ENCODE measurements at regions of chr9 and their contacts with region 1.

Region 1: DNA sequence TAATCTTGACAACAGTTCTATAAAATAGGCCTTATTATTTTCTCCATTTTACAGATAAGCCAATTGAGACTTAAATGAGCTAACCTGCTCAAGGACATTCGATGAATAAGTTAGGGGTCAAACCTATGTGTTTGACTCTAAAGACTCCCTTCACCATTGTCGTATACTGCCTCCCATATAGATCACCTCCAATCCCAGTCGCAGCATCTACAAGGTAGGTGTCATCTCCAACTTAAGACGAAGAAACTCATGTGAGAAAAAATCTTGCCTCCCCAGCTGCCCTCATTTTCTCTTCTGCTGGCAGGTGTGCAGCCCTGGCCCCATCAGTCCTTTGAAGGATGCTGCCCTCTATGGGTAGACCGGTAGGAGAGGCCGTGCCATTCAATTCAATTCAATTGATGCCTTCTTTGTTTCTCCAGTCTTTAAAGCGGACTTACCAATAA is 75.2 kb upstream of the SMARCA2 start:
- DNase-seq: peak; percentile 82
- ATAC-seq: peak; percentile 87
- H3K4me3 ChIP-seq: peak overlapping the region; percentile 39
- H3K27ac ChIP-seq: peak overlapping the region; percentile 97
- H3K4me1 ChIP-seq: peaks cover 25% of the 10 kb centered on the region
- H3K27me3 ChIP-seq: no peaks in the 10 kb centered on the region
- CTCF ChIP-seq: peak; percentile 94 to 99 (median 97)
- EP300 ChIP-seq: peak; percentile 19 to 23; a peak in 1 of 4 replicates
- POLR2A ChIP-seq: no peak
- RAD21 ChIP-seq: peak; percentile 95

Region 2: GRCh38 chr9:1709345-1709744 is 230.6 kb before region 1 on chr9:
- CTCF ChIA-PET with region 1: interaction called, 24 read pairs
- POLR2A ChIA-PET with region 1: no interaction called
- RAD21 ChIA-PET with region 1: interaction called, 10 read pairs
- SMC1A ChIA-PET with region 1: interaction called, 10 read pairs
- in situ Hi-C with region 1: no loop called
- intact Hi-C with region 1: loop called (anchors 5 kb)
- DNase-seq: no peak
- ATAC-seq: peak; percentile 64
- H3K4me3 ChIP-seq: no peak overlapping the region
- H3K27ac ChIP-seq: no peak overlapping the region
- H3K4me1 ChIP-seq: no peaks in the 10 kb centered on the region
- H3K27me3 ChIP-seq: no peaks in the 10 kb centered on the region
- CTCF ChIP-seq: peak; percentile 35 to 58 (median 55); a peak in 4 of 6 replicates
- EP300 ChIP-seq: no peak
- POLR2A ChIP-seq: no peak
- RAD21 ChIP-seq: peak; percentile 45

Region 3: GRCh38 chr9:1837449-1838084 is 102.4 kb before region 1 on chr9:
- CTCF ChIA-PET with region 1: interaction called, 87 read pairs
- POLR2A ChIA-PET with region 1: interaction called, 4 read pairs
- RAD21 ChIA-PET with region 1: interaction called, 40 read pairs
- SMC1A ChIA-PET with region 1: interaction called, 40 read pairs
- in situ Hi-C with region 1: no loop called
- intact Hi-C with region 1: loop called (anchors 1 kb)
- DNase-seq: peak; percentile 45
- ATAC-seq: peak; percentile 98
- H3K4me3 ChIP-seq: no peak overlapping the region
- H3K27ac ChIP-seq: no peak overlapping the region
- H3K4me1 ChIP-seq: no peaks in the 10 kb centered on the region
- H3K27me3 ChIP-seq: no peaks in the 10 kb centered on the region
- CTCF ChIP-seq: peak; percentile 70 to 77 (median 74)
- EP300 ChIP-seq: no peak
- POLR2A ChIP-seq: no peak
- RAD21 ChIP-seq: peak; percentile 71

Region 4: GRCh38 chr9:1882711-1883403 is 57.1 kb before region 1 on chr9:
- CTCF ChIA-PET with region 1: interaction called, 26 read pairs
- POLR2A ChIA-PET with region 1: interaction called, 11 read pairs
- RAD21 ChIA-PET with region 1: interaction called, 50 read pairs
- SMC1A ChIA-PET with region 1: interaction called, 42 read pairs
- in situ Hi-C with region 1: loop called (anchors 5 kb)
- intact Hi-C with region 1: no loop called
- DNase-seq: no peak
- ATAC-seq: no peak
- H3K4me3 ChIP-seq: no peak overlapping the region
- H3K27ac ChIP-seq: no peak overlapping the region
- H3K4me1 ChIP-seq: peaks cover 27% of the 10 kb centered on the region
- H3K27me3 ChIP-seq: no peaks in the 10 kb centered on the region
- CTCF ChIP-seq: no peak
- EP300 ChIP-seq: no peak
- POLR2A ChIP-seq: no peak
- RAD21 ChIP-seq: no peak

Region 5: GRCh38 chr9:2053883-2054845 is 114.2 kb after region 1 on chr9:
- CTCF ChIA-PET with region 1: interaction called, 5 read pairs
- POLR2A ChIA-PET with region 1: interaction called, 3 read pairs
- RAD21 ChIA-PET with region 1: interaction called, 5 read pairs
- SMC1A ChIA-PET with region 1: interaction called, 34 read pairs
- in situ Hi-C with region 1: no loop called
- intact Hi-C with region 1: loop called (anchors 2 kb)
- DNase-seq: peak; percentile 95
- ATAC-seq: peak; percentile 95
- H3K4me3 ChIP-seq: peak overlapping the region; percentile 31; the same call in 1 of the 2 replicates
- H3K27ac ChIP-seq: peak overlapping the region; percentile 78
- H3K4me1 ChIP-seq: peaks cover 33% of the 10 kb centered on the region
- H3K27me3 ChIP-seq: no peaks in the 10 kb centered on the region
- CTCF ChIP-seq: no peak
- EP300 ChIP-seq: peak; percentile 87 to 88
- POLR2A ChIP-seq: 0 out of 2 replicates have a peak, but pooled peaks have one; percentile 28
- RAD21 ChIP-seq: 0 out of 2 replicates have a peak, but pooled peaks have one; percentile 6

Measured in GM12878 (cell line).